Activated CD4-positive, alpha-beta T cell treated with anti-CD3 and anti-CD28 coated beads, Interleukin-2, amount 10 ng/mL, durations not matched to agents 24 days and 14 days (primary cell): ENCODE measurements at regions of chr12 and their contacts with region 1.

Region 1: DNA sequence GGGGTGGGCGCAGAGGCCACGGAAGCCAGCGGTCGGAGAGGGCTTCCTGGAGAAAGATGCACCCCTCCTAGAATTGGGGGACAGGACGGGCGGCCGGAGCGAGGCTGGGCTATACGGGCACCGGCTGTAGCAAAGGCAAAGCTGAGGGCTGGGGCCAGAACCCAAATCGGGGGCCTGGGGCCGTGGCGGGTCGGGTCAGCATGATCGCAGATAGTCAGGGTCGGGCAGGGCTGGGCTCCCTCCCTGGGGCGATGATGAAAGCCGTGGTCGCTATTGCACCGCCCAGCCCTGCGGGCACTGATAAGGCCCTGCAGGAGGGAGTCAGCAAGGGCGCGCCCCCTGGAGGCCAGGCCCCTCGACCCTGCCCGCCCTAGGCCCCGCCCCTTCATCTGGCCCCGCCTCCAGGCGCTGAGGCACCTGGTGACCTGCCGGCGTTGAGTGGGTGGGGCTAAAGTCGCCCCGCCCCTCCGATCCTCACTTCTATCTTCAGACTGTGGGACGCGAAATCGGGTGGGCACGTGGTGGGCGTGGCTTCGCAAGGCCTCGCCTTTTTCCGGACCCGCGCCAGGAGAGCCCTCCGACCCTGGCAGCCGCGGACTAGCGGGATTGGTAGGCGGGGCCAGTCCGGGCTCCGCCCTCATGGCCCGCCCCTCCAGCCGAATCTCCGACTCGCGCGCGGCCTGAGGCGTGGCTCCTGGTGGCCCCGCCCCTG is 418 bp upstream of the SH2B3 start:
- DNase-seq: peak; percentile 99
- H3K4me3 Mint-ChIP-seq: peak overlapping the region; percentile 88
- H3K27ac Mint-ChIP-seq: peak overlapping the region; percentile 96
- H3K4me1 Mint-ChIP-seq: peaks cover 50% of the 10 kb centered on the region
- H3K27me3 Mint-ChIP-seq: no peaks in the 10 kb centered on the region

Region 2: DNA sequence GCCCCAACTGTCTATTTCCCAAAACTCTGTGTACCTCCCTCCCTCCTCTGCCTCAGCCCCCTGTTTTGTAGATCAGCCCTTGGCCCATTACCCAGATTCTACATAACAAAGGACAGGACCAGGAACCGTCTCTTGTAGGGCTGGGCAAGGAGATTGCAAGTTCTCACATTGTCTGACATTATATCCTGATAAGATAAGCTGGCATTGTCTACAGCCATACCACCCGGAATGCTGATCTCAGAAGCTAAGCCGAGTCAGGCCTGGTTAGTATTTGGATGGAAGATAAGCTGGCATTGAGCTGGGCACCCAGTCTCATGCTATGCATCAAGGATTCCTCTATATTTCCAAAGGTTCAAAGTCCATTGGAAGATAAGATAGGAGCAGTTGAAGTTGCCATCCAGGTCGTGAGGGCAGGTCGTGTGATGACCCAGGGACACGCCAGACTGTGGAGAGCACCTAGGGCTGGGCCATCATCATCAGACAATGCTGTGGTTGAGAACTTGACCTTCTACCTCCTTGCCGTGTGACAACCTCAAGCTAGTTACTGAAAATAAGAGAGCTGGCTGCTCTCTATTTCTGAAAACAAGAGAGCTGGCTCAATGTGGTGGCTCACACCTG is 65.9 kb before region 1 on chr12:
- intact Hi-C with region 1: no loop called
- DNase-seq: no peak
- H3K4me3 Mint-ChIP-seq: no peak overlapping the region
- H3K27ac Mint-ChIP-seq: no peak overlapping the region
- H3K4me1 Mint-ChIP-seq: no peaks in the 10 kb centered on the region
- H3K27me3 Mint-ChIP-seq: no peaks in the 10 kb centered on the region

Region 3: GRCh38 chr12:111434680-111435338 is 29.5 kb after region 1 on chr12:
- intact Hi-C with region 1: loop called (anchors 1 kb)
- DNase-seq: peak; percentile 96
- H3K4me3 Mint-ChIP-seq: peak overlapping the region; percentile 78
- H3K27ac Mint-ChIP-seq: peak overlapping the region; percentile 97
- H3K4me1 Mint-ChIP-seq: peaks cover 83% of the 10 kb centered on the region
- H3K27me3 Mint-ChIP-seq: no peaks in the 10 kb centered on the region

Region 4: DNA sequence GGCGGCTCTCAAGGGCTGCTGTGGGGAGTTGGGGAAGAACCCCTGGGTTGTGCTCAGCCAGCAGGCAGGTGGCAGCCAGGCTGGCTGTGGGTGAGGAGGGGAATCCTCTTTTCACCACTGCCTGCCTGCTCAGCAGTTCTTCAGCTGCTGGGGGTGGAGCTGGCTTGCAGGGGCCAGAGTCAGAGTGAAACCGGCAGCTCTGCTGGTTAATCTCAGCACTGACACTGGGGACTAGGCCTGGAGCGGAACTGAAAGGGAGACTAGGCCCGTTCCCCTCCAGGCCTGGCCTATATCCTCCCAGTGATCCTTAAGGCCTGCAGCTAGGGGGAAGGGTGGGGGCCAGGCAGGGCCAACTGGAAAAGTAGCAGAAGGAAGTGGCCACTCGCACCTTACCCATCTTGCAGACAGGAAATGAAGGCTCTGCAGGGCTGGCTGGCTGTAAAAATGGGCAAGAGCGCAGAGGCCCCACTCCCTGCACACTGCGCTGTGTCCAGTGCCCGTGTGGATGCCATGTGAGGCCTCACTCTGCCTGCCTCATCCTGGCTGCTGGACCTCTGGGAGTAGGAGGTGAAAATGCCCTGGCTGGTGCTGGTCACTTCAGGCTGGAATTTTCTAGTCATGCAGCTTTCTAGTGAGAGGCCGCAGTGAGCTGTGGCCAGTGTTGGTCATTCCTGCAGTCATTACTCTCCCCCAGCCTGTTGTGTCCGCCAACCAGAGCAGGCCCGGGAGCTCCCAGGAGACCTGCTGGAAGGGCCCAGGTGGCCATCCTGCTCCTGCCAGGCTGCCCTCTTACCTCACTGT is 39.8 kb after region 1 on chr12:
- intact Hi-C with region 1: loop called (anchors 1 kb)
- DNase-seq: peak; percentile 96
- H3K4me3 Mint-ChIP-seq: peak overlapping the region; percentile 71
- H3K27ac Mint-ChIP-seq: peak overlapping the region; percentile 88
- H3K4me1 Mint-ChIP-seq: peaks cover 82% of the 10 kb centered on the region
- H3K27me3 Mint-ChIP-seq: no peaks in the 10 kb centered on the region

Region 5: GRCh38 chr12:111451649-111452129 is 46.4 kb after region 1 on chr12:
- intact Hi-C with region 1: loop called (anchors 1 kb)
- DNase-seq: peak; percentile 83
- H3K4me3 Mint-ChIP-seq: no peak overlapping the region
- H3K27ac Mint-ChIP-seq: peak overlapping the region; percentile 12
- H3K4me1 Mint-ChIP-seq: peaks cover 42% of the 10 kb centered on the region
- H3K27me3 Mint-ChIP-seq: no peaks in the 10 kb centered on the region

Region 6: GRCh38 chr12:111546758-111547383 is 141.6 kb after region 1 on chr12:
- intact Hi-C with region 1: loop called (anchors 5 kb)
- DNase-seq: no peak
- H3K4me3 Mint-ChIP-seq: peak overlapping the region; percentile 47
- H3K27ac Mint-ChIP-seq: peak overlapping the region; percentile 77
- H3K4me1 Mint-ChIP-seq: peaks cover 20% of the 10 kb centered on the region
- H3K27me3 Mint-ChIP-seq: no peaks in the 10 kb centered on the region

Region 7: DNA sequence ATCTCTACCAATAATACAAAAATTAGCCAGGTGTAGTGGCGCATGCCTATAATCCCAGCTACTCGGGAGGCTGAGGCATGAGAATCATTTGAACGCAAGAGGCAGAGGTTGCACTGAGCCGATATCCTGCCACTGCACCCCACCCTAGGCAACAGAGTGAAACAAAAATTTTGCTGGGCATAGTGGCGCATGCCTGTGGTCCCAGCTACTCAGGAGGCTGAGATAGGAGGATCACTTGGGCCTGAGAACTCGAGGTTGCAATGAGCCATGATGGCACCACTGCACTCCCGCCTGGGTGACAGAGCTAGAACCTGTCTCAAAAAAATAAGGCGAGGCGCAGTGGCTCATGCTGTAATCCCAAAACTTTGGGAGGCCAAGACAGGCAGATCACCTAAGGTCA is 184.3 kb after region 1 on chr12:
- intact Hi-C with region 1: no loop called
- DNase-seq: no peak
- H3K4me3 Mint-ChIP-seq: no peak overlapping the region
- H3K27ac Mint-ChIP-seq: no peak overlapping the region
- H3K4me1 Mint-ChIP-seq: no peaks in the 10 kb centered on the region
- H3K27me3 Mint-ChIP-seq: no peaks in the 10 kb centered on the region

Region 8: GRCh38 chr12:111599459-111600204 is 194.3 kb after region 1 on chr12:
- intact Hi-C with region 1: loop called (anchors 2 kb)
- DNase-seq: peak; percentile 95
- H3K4me3 Mint-ChIP-seq: peak overlapping the region; percentile 78
- H3K27ac Mint-ChIP-seq: peak overlapping the region; percentile 72
- H3K4me1 Mint-ChIP-seq: peaks cover 17% of the 10 kb centered on the region
- H3K27me3 Mint-ChIP-seq: no peaks in the 10 kb centered on the region

Region 9: DNA sequence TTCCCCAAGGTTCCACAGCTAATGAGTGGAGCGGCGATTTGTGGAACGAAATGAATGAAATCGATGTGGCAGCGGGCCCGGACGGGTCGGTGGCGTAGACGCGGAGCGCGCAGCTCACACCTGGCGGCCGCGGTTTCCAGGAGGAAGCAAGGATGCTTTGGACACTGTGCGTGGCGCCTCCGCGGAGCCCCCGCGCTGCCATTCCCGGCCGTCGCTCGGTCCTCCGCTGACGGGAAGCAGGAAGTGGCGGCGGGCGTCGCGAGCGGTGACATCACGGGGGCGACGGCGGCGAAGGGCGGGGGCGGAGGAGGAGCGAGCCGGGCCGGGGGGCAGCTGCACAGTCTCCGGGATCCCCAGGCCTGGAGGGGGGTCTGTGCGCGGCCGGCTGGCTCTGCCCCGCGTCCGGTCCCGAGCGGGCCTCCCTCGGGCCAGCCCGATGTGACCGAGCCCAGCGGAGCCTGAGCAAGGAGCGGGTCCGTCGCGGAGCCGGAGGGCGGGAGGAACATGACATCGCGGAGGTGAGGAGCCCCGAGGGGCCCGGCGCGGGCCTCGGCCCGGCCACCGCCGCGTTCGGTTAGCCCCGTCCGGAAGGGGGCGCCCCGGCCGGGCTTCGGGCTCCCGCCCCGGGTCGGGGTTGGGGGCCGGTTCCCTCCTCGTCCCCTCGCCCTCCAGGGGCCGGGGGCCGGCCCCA is 1013.4 kb after region 1 on chr12 and contains the start of gene PTPN11:
- intact Hi-C with region 1: loop called (anchors 10 kb)
- DNase-seq: peak; percentile 98
- H3K4me3 Mint-ChIP-seq: peak within 1 kb of the TSS; percentile 97
- H3K27ac Mint-ChIP-seq: peak within 1 kb of the TSS; percentile 99
- H3K4me1 Mint-ChIP-seq: peaks cover 42% of the 10 kb centered on the region
- H3K27me3 Mint-ChIP-seq: peaks cover 5% of the 10 kb centered on the region
- total RNA-seq, gene PTPN11: 173 and 177 TPM in 2 replicates